Calu3 (cell line): ENCODE measurements at regions of chr5 and their contacts with region 1.

Region 1: DNA sequence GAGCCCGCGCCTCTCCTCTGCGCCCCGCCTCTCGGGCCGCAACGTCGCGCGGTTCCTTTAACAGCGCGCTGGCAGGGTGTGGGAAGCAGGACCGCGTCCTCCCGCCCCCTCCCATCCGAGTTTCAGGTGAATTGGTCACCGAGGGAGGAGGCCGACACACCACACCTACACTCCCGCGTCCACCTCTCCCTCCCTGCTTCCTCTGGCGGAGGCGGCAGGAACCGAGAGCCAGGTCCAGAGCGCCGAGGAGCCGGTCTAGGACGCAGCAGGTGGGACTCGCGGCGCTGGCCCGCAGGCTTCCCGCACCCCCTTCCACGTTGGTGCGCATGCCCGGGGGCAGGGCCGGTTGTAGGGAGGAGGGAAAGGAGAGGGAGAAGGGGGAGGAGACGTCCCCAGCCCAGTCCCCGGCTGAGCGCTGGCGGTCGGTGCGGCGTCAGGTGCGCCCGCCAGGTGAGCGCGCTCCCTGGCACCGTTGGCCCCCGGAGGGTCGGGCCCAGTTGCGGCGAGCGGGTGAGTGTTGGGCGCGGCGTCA is at the start of gene OCLN:
- DNase-seq: peak; percentile 91
- H3K4me3 Mint-ChIP-seq: peak within 1 kb of the TSS; percentile 100
- H3K27ac Mint-ChIP-seq: peak within 1 kb of the TSS; percentile 98
- H3K4me1 Mint-ChIP-seq: peaks cover 49% of the 10 kb centered on the region
- H3K27me3 Mint-ChIP-seq: no peaks in the 10 kb centered on the region
- CTCF ChIP-seq: no peak
- total RNA-seq, gene OCLN: 154 and 161 TPM in 2 replicates

Region 2: GRCh38 chr5:68612972-68613371 is 879.5 kb before region 1 on chr5:
- CTCF ChIA-PET with region 1: no interaction called
- intact Hi-C with region 1: no loop called
- DNase-seq: no peak
- H3K4me3 Mint-ChIP-seq: no peak overlapping the region
- H3K27ac Mint-ChIP-seq: no peak overlapping the region
- H3K4me1 Mint-ChIP-seq: no peaks in the 10 kb centered on the region
- H3K27me3 Mint-ChIP-seq: no peaks in the 10 kb centered on the region
- CTCF ChIP-seq: no peak

Region 3: DNA sequence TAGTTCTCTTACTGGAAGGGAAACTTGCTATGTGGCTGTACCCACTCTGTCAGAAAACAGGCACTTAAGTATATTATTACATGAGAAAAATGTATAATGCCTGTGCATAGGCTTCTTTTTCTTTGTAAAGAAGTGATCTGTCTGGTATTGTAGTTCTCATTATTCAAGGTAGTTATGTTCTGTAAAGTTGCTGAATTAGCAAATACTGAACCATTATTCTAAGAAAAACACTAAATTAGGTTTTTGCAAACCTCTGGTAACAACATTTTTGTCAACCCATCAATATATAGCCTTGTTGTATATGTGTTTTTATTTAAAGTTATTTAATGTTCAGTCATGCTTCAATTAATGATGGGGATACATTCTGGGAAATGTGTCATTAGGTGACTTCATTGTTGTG is 114.1 kb before region 1 on chr5:
- CTCF ChIA-PET with region 1: no interaction called
- intact Hi-C with region 1: no loop called
- DNase-seq: no peak
- H3K4me3 Mint-ChIP-seq: no peak overlapping the region
- H3K27ac Mint-ChIP-seq: no peak overlapping the region
- H3K4me1 Mint-ChIP-seq: no peaks in the 10 kb centered on the region
- H3K27me3 Mint-ChIP-seq: no peaks in the 10 kb centered on the region
- CTCF ChIP-seq: no peak

Region 4: GRCh38 chr5:69414885-69415583 is 77.4 kb before region 1 on chr5 and contains the start of gene MARVELD2:
- CTCF ChIA-PET with region 1: no interaction called
- intact Hi-C with region 1: loop called (anchors 2 kb)
- DNase-seq: peak; percentile 93
- H3K4me3 Mint-ChIP-seq: peak within 1 kb of the TSS; percentile 83
- H3K27ac Mint-ChIP-seq: peak within 1 kb of the TSS; percentile 87
- H3K4me1 Mint-ChIP-seq: peaks cover 32% of the 10 kb centered on the region
- H3K27me3 Mint-ChIP-seq: no peaks in the 10 kb centered on the region
- CTCF ChIP-seq: no peak
- total RNA-seq, gene MARVELD2: 40.9 and 46.0 TPM in 2 replicates

Region 5: DNA sequence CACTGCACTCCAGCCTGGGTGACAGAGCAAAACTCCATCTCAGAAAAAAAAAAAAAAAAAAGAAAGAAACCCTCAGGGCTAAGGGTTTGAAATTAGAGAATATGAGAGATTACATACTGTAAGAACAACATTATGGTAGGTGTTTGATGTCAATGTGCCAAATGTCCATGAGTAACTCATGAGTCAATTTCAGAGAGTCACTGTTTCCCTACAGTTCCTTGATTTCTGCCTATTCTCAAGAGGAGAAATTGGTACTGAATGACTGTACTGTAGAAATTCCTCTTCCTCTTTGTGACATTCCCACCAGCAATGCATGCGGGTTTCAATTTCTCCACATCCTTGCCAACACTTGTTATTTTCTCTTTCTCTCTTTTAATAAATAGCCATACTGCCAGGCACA is 42.3 kb before region 1 on chr5:
- CTCF ChIA-PET with region 1: interaction called, 9 read pairs
- intact Hi-C with region 1: loop called (anchors 5 kb)
- DNase-seq: no peak
- H3K4me3 Mint-ChIP-seq: no peak overlapping the region
- H3K27ac Mint-ChIP-seq: no peak overlapping the region
- H3K4me1 Mint-ChIP-seq: peaks cover 29% of the 10 kb centered on the region
- H3K27me3 Mint-ChIP-seq: no peaks in the 10 kb centered on the region
- CTCF ChIP-seq: no peak